Gastrocnemius medialis (tissue), 4 donors: ENCODE measurements at regions of chr1 and their contacts with region 1.

Region 1: GRCh38 chr1:231757101-231757404 is 130.5 kb downstream of the DISC1 start:
- DNase-seq: no peak
- ATAC-seq: peak in 1 of 2 donors; percentile 41
- H3K4me3 ChIP-seq: no peak overlapping the region
- H3K27ac ChIP-seq: no peak overlapping the region
- H3K4me1 ChIP-seq: peaks cover 0 to 5% of the 10 kb centered on the region in 2 donors
- H3K27me3 ChIP-seq: no peaks in the 10 kb centered on the region
- CTCF ChIP-seq: peak in 1 of 5 experiments; percentile 6
- POLR2A ChIP-seq: no peak

Region 2: DNA sequence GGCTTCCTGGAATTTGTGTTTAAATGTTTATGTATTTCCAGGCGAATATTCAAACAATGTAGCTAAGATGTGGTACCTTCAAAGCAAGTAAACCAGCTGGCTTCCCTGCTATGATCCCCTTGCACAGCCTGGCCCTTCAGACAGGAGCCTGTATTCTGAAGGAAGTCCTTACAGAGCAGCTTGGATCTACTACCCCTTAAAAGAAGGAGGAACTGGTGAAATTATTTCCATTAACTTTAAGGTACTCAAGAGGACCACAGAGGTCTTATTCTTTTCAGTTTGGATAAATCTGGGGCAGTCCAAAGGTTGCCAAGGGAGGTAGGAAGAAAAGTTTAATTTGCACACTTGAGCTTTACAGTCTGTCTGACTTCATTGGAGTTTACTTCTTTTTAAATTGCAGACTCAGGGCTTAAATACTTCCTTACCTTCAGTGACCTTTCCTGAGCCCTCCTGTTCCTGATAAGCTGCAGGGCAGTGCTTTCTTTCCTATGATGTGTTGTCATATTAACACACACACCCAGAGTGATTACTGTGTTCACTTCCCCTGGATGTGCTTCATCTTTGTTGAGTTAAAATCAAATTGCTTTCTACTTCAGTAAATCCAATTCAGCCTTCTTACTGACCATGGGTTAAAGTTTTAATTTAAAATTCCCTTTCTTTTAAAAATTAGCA is 90.0 kb before region 1 on chr1:
- in situ Hi-C with region 1: no loop called
- intact Hi-C with region 1: no loop called
- DNase-seq: no peak
- ATAC-seq: no peak
- H3K4me3 ChIP-seq: no peak overlapping the region
- H3K27ac ChIP-seq: no peak overlapping the region
- H3K4me1 ChIP-seq: no peaks in the 10 kb centered on the region
- H3K27me3 ChIP-seq: no peaks in the 10 kb centered on the region
- CTCF ChIP-seq: no peak
- POLR2A ChIP-seq: no peak

Region 3: DNA sequence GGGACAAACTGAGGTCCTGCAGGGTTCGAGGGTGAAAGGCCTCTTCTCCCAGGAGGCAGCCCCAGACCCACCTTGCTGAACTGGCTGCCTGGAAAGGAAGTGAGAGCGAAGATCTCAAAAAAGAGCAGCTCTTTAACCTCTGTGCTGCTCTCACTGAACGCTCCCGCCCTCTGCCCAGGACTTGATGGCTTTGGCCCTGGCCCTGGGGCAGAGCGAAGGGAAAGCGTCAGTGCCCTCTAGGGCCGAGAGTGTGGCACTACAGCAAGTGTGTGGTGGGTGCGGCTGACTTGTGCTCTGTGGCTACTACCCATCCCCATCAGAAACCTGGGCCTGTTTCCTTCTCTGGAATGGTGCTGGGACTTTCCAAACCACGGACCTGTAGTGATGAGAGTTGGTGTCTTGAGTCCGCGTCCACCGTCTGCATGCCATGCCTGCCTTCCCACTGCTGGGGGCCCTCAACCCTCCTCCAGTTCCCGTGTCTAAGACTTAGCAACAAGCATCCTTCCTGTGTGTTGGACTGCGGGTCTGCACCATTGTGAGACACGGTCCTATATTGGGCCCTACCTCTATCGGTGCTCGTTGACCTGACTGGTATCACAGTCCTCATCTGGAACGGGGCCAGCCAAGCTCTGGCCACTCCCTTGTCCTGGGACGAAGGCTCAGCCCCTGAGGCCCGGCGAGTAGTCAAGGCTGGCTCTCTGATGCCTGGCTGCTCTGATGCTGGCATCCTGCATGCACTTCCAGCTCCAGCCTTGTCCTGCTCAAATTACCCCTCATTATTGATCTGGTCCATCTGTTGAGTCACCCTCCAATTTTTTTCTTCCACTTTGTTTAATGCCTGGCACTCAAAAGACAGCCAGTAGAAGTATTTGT is 49.8 kb after region 1 on chr1:
- in situ Hi-C with region 1: loop called in 1 of 4 experiments (anchors 5 kb)
- intact Hi-C with region 1: loop called (anchors 1 kb)
- DNase-seq: peak; percentile 15 to 55
- ATAC-seq: peak; percentile 39 to 61
- H3K4me3 ChIP-seq: no peak overlapping the region
- H3K27ac ChIP-seq: peak overlapping the region in 1 of 4 donors; percentile 52
- H3K4me1 ChIP-seq: no peaks in the 10 kb centered on the region
- H3K27me3 ChIP-seq: no peaks in the 10 kb centered on the region
- CTCF ChIP-seq: peak; percentile 47 to 75 (median 54)
- POLR2A ChIP-seq: no peak

Region 4: GRCh38 chr1:231853588-231854207 is 96.6 kb after region 1 on chr1:
- in situ Hi-C with region 1: no loop called
- intact Hi-C with region 1: loop called (anchors 10 kb)
- DNase-seq: peak in 1 of 2 donors; percentile 43
- ATAC-seq: peak; percentile 51 to 60
- H3K4me3 ChIP-seq: no peak overlapping the region
- H3K27ac ChIP-seq: peak overlapping the region in 1 of 4 donors; percentile 7
- H3K4me1 ChIP-seq: no peaks in the 10 kb centered on the region
- H3K27me3 ChIP-seq: no peaks in the 10 kb centered on the region
- CTCF ChIP-seq: no peak
- POLR2A ChIP-seq: no peak

Region 5: GRCh38 chr1:231885209-231885854 is 128.3 kb after region 1 on chr1:
- in situ Hi-C with region 1: no loop called
- intact Hi-C with region 1: no loop called
- DNase-seq: no peak
- ATAC-seq: no peak
- H3K4me3 ChIP-seq: no peak overlapping the region
- H3K27ac ChIP-seq: no peak overlapping the region
- H3K4me1 ChIP-seq: no peaks in the 10 kb centered on the region
- H3K27me3 ChIP-seq: no peaks in the 10 kb centered on the region
- CTCF ChIP-seq: no peak
- POLR2A ChIP-seq: no peak